HCT116 (cell line): ENCODE measurements at regions of chr17 and their contacts with region 1.

Region 1: GRCh38 chr17:64145757-64146417 is 15.9 kb upstream of the ERN1 start:
- DNase-seq: peak; percentile 100
- ATAC-seq: peak; percentile 88
- H3K4me3 ChIP-seq: peak overlapping the region; percentile 74 to 88
- H3K27ac ChIP-seq: peak overlapping the region; percentile 95
- H3K4me1 ChIP-seq: peaks cover 6 to 29% of the 10 kb centered on the region in 2 experiments; a peak in 3 of 4 replicates
- H3K27me3 ChIP-seq: no peaks in the 10 kb centered on the region
- CTCF ChIP-seq: no peak
- POLR2A ChIP-seq: peak; percentile 100
- RAD21 ChIP-seq: no peak

Region 2: GRCh38 chr17:63919311-63919723 is 226.6 kb before region 1 on chr17:
- CTCF ChIA-PET with region 1: interaction called, 3 read pairs
- POLR2A ChIA-PET with region 1: interaction called, 13 read pairs
- RAD21 ChIA-PET with region 1: no interaction called
- intact Hi-C with region 1: no loop called
- DNase-seq: peak; percentile 59
- ATAC-seq: peak; percentile 98
- H3K4me3 ChIP-seq: no peak overlapping the region
- H3K27ac ChIP-seq: no peak overlapping the region
- H3K4me1 ChIP-seq: no peaks in the 10 kb centered on the region
- H3K27me3 ChIP-seq: no peaks in the 10 kb centered on the region
- CTCF ChIP-seq: peak; percentile 96 to 98 (median 98)
- POLR2A ChIP-seq: no peak
- RAD21 ChIP-seq: peak; percentile 97

Region 3: DNA sequence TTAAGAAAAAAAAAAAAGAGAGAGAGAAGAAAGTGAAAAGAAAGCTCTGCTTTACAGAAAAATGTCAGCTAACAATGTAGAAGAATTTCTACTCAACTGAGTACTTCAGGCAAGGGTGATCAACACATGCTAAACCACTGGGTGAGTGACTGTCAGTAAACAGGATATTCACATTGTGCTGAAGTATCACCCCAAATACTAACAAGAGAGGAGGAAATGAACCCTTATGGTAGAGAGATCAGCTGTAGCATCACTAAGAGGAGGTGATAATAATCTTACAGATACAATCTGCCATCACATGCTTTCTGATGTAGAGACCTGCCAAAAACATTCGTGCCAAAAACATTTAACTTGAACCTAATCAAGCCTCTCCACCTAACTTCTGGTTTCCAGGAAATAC is 94.7 kb before region 1 on chr17:
- CTCF ChIA-PET with region 1: no interaction called
- POLR2A ChIA-PET with region 1: no interaction called
- RAD21 ChIA-PET with region 1: no interaction called
- intact Hi-C with region 1: no loop called
- DNase-seq: no peak
- ATAC-seq: no peak
- H3K4me3 ChIP-seq: no peak overlapping the region
- H3K27ac ChIP-seq: no peak overlapping the region
- H3K4me1 ChIP-seq: no peaks in the 10 kb centered on the region; a peak in 1 of 4 replicates
- H3K27me3 ChIP-seq: no peaks in the 10 kb centered on the region
- CTCF ChIP-seq: no peak
- POLR2A ChIP-seq: no peak
- RAD21 ChIP-seq: no peak

Region 4: DNA sequence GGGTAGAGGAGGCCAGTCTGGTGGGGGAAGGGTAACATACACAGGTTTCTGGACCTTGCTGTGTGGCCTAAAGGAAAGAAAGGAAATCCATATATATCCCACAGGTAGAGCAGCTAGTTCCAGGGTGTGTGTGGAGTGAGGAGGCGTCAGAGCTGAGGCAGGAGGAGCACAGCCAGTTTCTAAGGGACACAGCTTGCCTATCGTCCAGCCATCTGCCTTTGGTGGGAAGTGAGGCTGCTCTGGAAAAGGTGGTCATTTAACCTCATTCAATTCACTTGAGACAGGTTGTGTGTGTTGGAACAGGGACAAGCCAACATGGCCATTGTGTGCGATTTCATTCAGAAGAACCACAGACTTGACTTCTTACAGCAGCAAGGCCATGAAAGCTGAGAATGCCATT is 21.0 kb after region 1 on chr17:
- CTCF ChIA-PET with region 1: no interaction called
- POLR2A ChIA-PET with region 1: interaction called, 12 read pairs
- RAD21 ChIA-PET with region 1: no interaction called
- intact Hi-C with region 1: no loop called
- DNase-seq: no peak
- ATAC-seq: no peak
- H3K4me3 ChIP-seq: no peak overlapping the region
- H3K27ac ChIP-seq: no peak overlapping the region
- H3K4me1 ChIP-seq: no peaks in the 10 kb centered on the region
- H3K27me3 ChIP-seq: no peaks in the 10 kb centered on the region
- CTCF ChIP-seq: no peak
- POLR2A ChIP-seq: no peak
- RAD21 ChIP-seq: no peak

Region 5: GRCh38 chr17:64190488-64190887 is 44.6 kb after region 1 on chr17:
- CTCF ChIA-PET with region 1: no interaction called
- POLR2A ChIA-PET with region 1: no interaction called
- RAD21 ChIA-PET with region 1: no interaction called
- intact Hi-C with region 1: no loop called
- DNase-seq: no peak
- ATAC-seq: no peak
- H3K4me3 ChIP-seq: no peak overlapping the region
- H3K27ac ChIP-seq: no peak overlapping the region
- H3K4me1 ChIP-seq: peaks cover 0 to 7% of the 10 kb centered on the region in 2 experiments; a peak in 1 of 4 replicates
- H3K27me3 ChIP-seq: no peaks in the 10 kb centered on the region
- CTCF ChIP-seq: no peak
- POLR2A ChIP-seq: no peak
- RAD21 ChIP-seq: no peak

Region 6: GRCh38 chr17:64242633-64243032 is 96.7 kb after region 1 on chr17:
- CTCF ChIA-PET with region 1: no interaction called
- POLR2A ChIA-PET with region 1: no interaction called
- RAD21 ChIA-PET with region 1: no interaction called
- intact Hi-C with region 1: no loop called
- DNase-seq: no peak
- ATAC-seq: no peak
- H3K4me3 ChIP-seq: no peak overlapping the region
- H3K27ac ChIP-seq: no peak overlapping the region
- H3K4me1 ChIP-seq: peaks cover 17 to 20% of the 10 kb centered on the region in 2 experiments
- H3K27me3 ChIP-seq: no peaks in the 10 kb centered on the region
- CTCF ChIP-seq: no peak
- POLR2A ChIP-seq: no peak
- RAD21 ChIP-seq: no peak

Region 7: DNA sequence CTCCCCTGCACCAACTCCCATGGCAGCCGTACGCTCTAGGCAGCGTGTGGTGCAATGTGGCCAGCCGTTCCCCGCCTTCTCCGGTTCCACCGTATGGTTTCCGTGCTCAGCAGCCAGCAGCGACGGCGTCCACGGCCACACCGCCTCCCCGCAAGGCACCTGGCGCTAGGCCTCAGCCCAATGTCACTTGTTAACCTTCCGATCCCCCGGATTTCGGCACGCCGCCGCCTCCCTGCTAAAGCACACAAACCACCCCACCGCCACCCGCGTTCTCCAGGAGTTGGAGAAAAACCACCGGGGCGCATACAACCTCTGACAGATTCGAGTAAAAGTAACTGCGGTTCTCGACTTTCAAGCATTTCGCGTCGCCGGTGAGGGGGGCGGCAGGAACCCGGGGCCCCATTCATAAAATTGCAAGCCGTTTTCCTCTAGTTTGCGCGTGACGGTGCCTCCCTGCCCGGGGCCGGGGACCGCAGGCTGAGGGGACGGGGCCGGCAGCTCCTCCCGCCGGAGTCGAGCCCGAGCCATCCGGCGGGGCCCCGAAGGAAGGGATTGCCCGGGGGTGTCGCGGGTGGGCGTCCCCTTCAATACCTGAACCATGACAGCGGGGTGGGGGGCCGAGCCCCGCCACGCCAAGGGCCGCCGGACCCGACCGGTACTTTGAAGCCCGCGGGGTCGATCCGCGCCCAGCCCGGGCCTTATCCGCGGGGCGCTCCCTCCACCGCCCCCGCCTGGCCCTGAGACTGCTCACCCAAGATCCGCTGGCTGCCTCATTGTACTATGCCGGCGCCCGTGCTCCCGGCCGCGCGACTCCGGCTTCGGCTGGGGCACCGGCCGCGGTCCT is 116.8 kb after region 1 on chr17 and contains the start of gene TEX2:
- CTCF ChIA-PET with region 1: interaction called, 5 read pairs
- POLR2A ChIA-PET with region 1: interaction called, 12 read pairs
- RAD21 ChIA-PET with region 1: no interaction called
- intact Hi-C with region 1: loop called (anchors 5 kb)
- DNase-seq: no peak
- ATAC-seq: peak; percentile 56
- H3K4me3 ChIP-seq: peak within 1 kb of the TSS; percentile 78 to 93
- H3K27ac ChIP-seq: peak within 1 kb of the TSS; percentile 44
- H3K4me1 ChIP-seq: peaks cover 9 to 27% of the 10 kb centered on the region in 2 experiments
- H3K27me3 ChIP-seq: 0 out of 2 replicates have a peak, but pooled peaks cover 3% of the 10 kb centered on the region
- CTCF ChIP-seq: no peak
- POLR2A ChIP-seq: no peak
- RAD21 ChIP-seq: no peak
- total RNA-seq, gene TEX2: 24.6 TPM

Region 8: GRCh38 chr17:64281962-64282727 is 136.3 kb after region 1 on chr17:
- CTCF ChIA-PET with region 1: interaction called, 26 read pairs
- POLR2A ChIA-PET with region 1: interaction called, 27 read pairs
- RAD21 ChIA-PET with region 1: interaction called, 3 to 6 read pairs
- intact Hi-C with region 1: loop called (anchors 1 kb)
- DNase-seq: peak; percentile 86
- ATAC-seq: peak; percentile 89
- H3K4me3 ChIP-seq: no peak overlapping the region
- H3K27ac ChIP-seq: no peak overlapping the region
- H3K4me1 ChIP-seq: peaks cover 0 to 10% of the 10 kb centered on the region in 2 experiments; a peak in 2 of 4 replicates
- H3K27me3 ChIP-seq: no peaks in the 10 kb centered on the region
- CTCF ChIP-seq: peak; percentile 87 to 94 (median 91)
- POLR2A ChIP-seq: no peak
- RAD21 ChIP-seq: peak; percentile 94

Region 9: GRCh38 chr17:64496786-64497564 is 351.1 kb after region 1 on chr17 and contains the start of gene POLG2:
- CTCF ChIA-PET with region 1: no interaction called
- POLR2A ChIA-PET with region 1: no interaction called
- RAD21 ChIA-PET with region 1: no interaction called
- intact Hi-C with region 1: loop called (anchors 10 kb)
- DNase-seq: peak; percentile 87
- ATAC-seq: peak; percentile 88
- H3K4me3 ChIP-seq: peak within 1 kb of the TSS; percentile 73 to 78
- H3K27ac ChIP-seq: peak within 1 kb of the TSS; percentile 79
- H3K4me1 ChIP-seq: peaks cover 10 to 52% of the 10 kb centered on the region in 2 experiments; a peak in 3 of 4 replicates
- H3K27me3 ChIP-seq: no peaks in the 10 kb centered on the region
- CTCF ChIP-seq: peak; percentile 69 to 81 (median 72); a peak in 5 of 6 replicates
- POLR2A ChIP-seq: peak; percentile 96
- RAD21 ChIP-seq: peak; percentile 75
- total RNA-seq, gene POLG2: 51.5 TPM

Region 10: DNA sequence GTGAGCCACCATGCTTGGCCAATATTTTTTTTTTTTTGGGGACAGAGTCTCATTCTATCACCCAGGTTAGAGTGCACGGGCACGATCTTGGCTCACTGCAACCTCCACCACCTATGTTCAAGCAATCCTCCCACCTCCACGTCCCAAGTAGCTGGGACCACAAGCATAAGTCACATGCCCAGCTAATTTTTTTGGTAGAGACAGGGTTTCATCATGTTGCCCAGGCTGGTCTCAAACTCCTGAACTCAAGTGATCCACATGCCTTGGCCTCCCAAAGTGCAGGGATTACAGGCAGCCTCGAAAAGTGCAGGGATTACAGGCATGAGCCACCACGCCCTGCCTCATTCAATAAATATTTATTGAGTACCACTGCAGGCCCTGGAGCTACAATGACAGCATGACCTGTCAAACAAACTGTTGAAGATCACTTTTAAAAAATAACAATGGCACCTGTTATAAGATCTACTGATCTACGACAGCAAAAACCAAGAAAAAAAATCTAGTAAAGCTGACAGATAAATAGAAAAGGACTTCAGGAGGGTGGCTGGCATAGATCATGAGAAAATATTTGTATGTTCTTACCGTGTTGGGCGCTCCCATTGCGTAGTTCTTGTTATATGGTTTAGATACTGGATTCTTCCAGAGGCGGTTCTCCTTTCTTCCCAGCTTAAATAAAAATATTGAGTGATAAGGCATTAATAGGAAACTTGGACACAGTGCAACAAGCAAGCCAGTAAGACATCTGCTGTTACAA is 437.2 kb after region 1 on chr17:
- CTCF ChIA-PET with region 1: no interaction called
- POLR2A ChIA-PET with region 1: no interaction called
- RAD21 ChIA-PET with region 1: no interaction called
- intact Hi-C with region 1: no loop called
- DNase-seq: no peak
- ATAC-seq: no peak
- H3K4me3 ChIP-seq: no peak overlapping the region
- H3K27ac ChIP-seq: no peak overlapping the region
- H3K4me1 ChIP-seq: no peaks in the 10 kb centered on the region
- H3K27me3 ChIP-seq: no peaks in the 10 kb centered on the region
- CTCF ChIP-seq: no peak
- POLR2A ChIP-seq: no peak
- RAD21 ChIP-seq: no peak